Activated T-helper 2 cell treated with anti-CD3 and anti-CD28 coated beads, Interferon-gamma antibody, Interleukin-2, Interleukin-4, amounts not matched to agents 10 μg/mL and 5 μg/mL and 100 μg/mL, durations not matched to agents 14 hours and 24 hours and 36 hours (primary cell): ENCODE measurements at regions of chr22 and their contacts with region 1.

Region 1: DNA sequence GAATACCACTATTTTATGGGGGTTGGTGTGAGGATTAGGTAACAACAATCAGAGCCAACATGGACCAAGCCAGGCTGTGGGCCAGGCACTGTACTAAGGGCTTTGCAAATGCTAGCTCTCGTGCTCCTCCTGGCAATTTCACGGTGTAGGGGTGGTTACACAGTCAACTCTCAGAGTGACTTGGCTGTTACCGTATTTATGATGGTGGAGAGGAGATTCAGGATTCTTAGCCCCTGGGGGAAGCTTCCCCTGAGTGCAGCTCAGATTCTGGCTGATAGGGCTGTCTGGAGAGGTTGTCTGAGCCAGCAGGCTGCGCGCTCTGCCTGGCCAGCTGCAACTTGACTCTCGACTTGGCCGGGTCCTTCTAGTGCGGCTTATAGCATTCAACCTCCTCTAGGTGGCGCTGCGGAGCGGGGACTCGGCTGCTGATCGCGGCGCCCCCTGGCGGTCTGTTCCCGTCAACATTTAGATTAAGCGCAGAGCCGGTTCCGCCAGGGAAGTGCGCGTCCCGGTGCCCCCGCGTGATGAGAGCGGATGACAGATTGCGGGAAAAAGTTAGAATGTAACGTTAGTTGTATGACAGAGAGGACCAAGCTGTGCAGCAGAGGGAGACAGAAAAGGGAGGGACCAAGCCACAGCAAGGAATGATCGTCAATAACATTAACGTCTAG is 4.5 kb upstream of the NCF4 start:
- DNase-seq: peak; percentile 88
- H3K4me3 Mint-ChIP-seq: no peak overlapping the region
- H3K27ac Mint-ChIP-seq: no peak overlapping the region
- H3K4me1 Mint-ChIP-seq: peaks cover 42% of the 10 kb centered on the region
- H3K27me3 Mint-ChIP-seq: peaks cover under 1% of the 10 kb centered on the region

Region 2: DNA sequence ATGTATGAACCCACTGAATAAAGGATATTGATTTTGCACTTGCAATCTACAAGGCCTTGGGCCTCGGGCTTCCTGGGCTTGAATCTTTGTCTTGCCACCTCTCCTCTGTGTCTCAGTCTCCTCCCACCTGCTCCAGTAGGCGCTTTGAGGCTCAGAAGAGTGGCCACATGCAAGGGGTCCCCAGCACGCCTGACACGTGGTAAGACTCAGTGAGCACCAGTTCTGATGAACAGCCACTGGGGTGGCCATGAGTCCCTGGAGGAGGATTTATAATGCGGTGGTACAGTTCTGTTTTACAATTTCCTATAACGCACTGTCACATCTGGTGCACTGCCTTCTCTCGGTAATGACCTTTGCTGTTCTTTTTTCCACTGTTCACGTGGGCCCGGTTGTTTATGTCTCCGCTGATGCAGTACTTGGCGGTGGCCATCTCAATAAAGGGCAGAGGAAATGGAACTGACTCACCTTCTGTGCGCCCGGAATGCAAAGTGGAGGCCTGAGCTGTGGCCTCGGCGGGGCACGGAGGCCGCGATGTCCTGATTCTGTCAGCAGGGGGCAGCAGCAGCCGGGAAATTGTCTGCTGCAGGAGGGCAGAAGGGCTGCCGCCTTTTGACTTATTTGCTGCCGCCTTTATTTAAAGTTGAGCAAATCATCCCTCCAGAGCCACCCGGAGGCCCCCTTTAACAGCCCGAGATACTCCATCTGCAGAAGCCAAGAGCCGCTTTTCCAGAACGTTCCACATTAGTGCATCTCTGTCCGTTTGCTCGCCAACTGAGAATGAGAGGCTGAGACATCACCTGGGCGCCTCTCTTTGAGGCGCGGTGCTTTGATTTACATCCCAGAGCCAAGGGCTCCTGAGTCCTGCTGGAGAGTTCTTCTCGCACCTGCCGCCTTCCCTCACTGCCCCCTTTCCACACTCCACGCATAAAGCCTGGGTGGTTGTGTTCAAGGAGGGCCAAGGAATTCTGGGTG is 74.3 kb before region 1 on chr22:
- intact Hi-C with region 1: loop called (anchors 1 kb)
- DNase-seq: peak; percentile 83
- H3K4me3 Mint-ChIP-seq: peak overlapping the region; percentile 7
- H3K27ac Mint-ChIP-seq: peak overlapping the region; percentile 93
- H3K4me1 Mint-ChIP-seq: peaks cover 27% of the 10 kb centered on the region
- H3K27me3 Mint-ChIP-seq: peaks cover 7% of the 10 kb centered on the region

Region 3: DNA sequence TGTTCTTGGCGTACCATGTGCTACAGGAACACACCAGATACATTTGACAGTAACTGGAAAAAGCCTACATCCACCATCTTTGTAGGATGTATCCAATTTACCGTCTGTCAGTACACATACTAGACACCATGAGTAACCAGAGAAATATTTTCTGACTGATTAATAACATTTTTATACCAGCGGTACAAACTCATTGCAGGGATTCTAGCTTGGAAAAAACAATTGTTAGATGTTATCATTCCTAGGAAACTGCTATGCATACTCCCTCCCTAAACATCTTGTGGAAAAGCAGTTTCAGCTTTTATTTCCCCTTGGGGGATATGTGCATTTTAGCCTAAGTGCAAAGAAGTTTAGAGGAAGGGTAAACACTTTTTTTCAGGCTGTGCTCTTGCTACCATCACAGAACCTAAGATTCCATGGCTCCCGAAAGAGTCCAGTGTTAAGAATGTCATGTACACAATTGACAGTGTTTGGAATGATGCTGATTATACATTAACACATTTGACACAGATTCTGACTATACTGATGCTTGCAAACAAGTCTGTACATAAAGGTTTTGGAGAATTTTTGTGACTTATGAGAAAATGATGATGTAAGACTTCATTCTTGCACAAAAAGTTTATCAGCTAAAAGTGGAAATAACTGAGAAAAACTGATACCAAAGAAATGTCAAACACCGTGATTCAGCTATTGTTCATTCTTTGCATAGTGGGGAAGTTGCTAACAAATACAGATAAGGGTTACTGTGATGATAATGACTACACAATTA is 28.3 kb after region 1 on chr22:
- intact Hi-C with region 1: loop called (anchors 2 kb)
- DNase-seq: no peak
- H3K4me3 Mint-ChIP-seq: no peak overlapping the region
- H3K27ac Mint-ChIP-seq: peak overlapping the region; percentile 60
- H3K4me1 Mint-ChIP-seq: peaks cover 26% of the 10 kb centered on the region
- H3K27me3 Mint-ChIP-seq: peaks cover 2% of the 10 kb centered on the region

Region 4: DNA sequence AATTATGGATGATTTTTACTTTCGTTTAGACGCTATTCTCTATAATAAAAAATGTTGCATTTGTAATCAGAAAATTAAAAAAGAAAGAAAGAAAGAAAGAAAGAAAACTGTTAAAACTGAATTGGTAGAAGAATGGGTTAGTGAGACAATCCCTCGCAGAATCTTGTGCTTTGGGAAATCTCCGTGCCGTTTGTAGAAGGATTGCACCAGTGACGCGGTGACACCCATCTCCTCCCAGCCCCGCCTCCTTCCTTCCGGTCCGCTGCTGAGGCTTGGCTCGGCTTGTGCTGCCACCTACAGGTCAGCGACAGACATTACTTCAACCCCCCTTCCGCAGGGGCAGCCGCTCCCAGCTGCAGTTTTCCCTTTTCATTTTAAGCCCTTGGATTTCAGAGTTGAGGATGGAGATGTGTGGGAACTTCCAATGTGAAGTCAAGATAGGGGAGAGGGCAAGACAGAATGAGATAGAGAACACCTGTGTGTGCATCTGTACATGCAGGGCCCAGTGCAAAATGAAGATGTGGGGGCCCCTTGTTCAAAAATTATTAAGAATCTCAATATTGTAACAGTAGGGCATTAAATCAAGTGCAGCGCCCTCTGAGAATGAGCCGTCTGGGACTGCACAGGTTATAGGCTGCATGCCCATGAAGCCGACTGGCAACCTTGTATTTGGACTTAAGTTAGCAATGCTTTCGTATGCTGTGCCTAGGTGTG is 121.8 kb after region 1 on chr22:
- intact Hi-C with region 1: loop called (anchors 1 kb)
- DNase-seq: peak; percentile 84
- H3K4me3 Mint-ChIP-seq: peak overlapping the region; percentile 83
- H3K27ac Mint-ChIP-seq: peak overlapping the region; percentile 84
- H3K4me1 Mint-ChIP-seq: peaks cover 8% of the 10 kb centered on the region
- H3K27me3 Mint-ChIP-seq: no peaks in the 10 kb centered on the region